ENCODE measurements at regions of chr10 and their contacts with region 1.

Region 1: DNA sequence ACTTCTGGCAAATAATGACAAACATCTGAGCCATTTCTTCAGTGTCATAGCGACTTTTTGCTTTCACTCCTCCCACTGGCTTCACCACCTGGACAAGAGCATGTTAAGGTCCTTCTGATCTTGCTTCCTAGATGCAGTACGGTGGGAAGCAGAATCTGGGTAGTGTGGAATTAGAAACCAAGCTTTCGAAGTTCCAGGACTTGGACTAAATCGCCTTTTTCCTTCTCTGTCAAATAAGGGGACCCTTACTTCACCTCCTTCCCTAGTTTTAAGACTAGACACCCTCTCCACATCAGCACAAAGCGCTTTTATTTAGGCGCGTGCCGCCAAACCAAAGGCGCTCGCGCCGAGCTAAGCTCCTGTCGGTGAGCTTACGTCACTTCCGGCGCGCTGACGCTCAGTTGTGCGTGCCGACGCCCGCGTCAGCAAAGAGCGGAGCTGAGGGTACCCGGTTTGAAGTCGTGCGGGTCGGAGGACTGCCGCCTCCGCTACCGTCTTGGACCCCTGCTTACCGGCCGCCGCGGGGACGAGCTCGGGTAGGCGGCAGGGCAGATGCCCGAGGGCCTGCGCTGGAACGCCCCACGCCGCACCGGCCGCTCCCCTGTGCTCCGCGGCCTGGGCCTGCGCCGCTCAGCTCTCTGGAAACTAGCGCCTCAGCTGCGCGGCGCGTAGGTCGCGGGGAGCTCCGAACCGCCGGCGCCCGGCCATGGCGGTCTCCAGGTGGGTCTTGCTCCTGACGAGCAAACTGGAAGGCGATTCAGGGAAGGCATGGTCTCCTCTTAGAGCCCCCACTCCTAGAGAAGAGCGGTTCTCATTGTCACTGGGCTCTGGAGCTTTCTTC is at the start of gene BTAF1:
- DNase-seq: peak; percentile 94
- H3K4me3 Mint-ChIP-seq: peak within 1 kb of the TSS; percentile 88
- H3K27ac Mint-ChIP-seq: peak within 1 kb of the TSS; percentile 97
- H3K4me1 Mint-ChIP-seq: peaks cover 37% of the 10 kb centered on the region
- H3K27me3 Mint-ChIP-seq: peaks cover 1% of the 10 kb centered on the region
- total RNA-seq, gene BTAF1: 49.9 to 50.7 TPM

Region 2: DNA sequence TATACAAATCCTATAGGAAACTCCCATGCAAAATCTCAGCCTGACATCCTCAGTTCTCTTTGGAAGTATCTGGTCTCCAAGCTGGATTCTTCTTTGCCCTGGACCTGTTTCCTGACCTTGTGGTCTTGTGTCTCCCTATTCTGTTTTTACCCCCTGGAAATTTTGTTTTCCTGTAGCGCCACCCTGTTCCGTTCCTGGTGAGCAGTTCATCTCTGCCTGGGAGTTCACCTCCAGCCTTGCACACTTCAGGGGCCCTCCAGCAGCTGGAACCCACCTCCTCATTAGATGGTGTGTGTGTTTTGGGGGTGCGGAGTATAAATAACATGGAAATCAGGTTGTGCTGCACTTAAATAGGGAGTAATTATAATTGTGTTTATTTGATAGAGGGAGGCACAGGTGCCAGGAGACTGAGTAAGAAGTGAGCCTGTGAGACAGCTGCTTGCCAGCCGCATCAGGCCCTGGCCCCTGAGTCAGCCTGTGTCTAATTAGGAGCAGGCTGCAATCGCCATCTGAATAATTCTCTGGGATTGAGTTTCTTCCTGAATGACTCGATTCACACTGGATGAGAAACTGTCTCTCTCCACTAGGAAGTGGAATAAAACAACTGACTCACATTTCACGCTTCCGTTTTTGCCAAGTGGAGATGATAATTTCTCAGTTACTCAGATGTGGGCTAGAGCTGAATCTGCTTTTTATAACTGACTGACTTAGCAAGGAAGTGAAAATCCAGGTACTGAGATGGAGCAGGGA is 582.8 kb before region 1 on chr10:
- CTCF ChIA-PET with region 1: no interaction called
- POLR2A ChIA-PET with region 1: no interaction called
- intact Hi-C with region 1: no loop called
- DNase-seq: peak; percentile 23
- H3K4me3 Mint-ChIP-seq: no peak overlapping the region
- H3K27ac Mint-ChIP-seq: no peak overlapping the region
- H3K4me1 Mint-ChIP-seq: no peaks in the 10 kb centered on the region
- H3K27me3 Mint-ChIP-seq: no peaks in the 10 kb centered on the region

Region 3: DNA sequence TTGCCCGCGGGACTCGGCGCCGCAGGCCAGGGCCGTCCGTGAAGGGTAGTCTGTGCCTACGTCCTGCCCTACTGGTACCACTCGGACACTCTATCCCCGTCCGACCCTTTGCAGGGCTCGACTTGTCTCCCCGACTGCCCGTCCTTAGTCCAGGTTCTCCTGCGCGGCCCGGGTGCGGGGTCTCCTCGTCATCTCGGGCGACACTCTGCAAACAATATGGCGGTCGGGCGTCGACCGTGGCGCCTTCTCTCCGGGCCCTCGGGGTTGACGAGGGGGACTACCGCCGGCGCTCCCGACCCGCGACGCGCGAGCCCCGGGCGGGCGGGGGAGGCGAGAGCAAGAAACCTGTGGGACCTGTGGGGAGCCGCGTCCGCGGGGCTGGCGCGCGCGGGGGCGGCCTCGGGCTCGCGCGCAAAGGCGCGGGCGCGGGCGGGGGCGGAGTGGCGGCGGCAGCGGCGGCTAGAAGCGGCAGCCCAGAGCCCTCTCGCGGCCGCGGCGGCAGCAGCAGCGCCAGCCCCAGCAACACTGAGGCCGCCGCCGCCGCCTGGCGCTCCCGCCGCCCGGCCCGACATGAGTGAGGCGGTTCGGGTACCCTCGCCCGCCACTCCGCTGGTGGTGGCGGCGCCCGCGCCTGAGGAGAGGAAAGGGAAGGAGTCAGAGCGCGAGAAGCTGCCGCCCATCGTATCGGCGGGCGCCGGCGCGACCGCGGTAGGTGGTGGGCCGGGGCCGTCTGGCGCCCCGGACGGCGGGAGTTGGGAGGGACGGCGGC is 513.5 kb before region 1 on chr10 and contains the start of gene HECTD2:
- CTCF ChIA-PET with region 1: no interaction called
- POLR2A ChIA-PET with region 1: no interaction called
- intact Hi-C with region 1: loop called (anchors 5 kb)
- DNase-seq: peak; percentile 82
- H3K4me3 Mint-ChIP-seq: peak within 1 kb of the TSS; percentile 79
- H3K27ac Mint-ChIP-seq: peak within 1 kb of the TSS; percentile 83
- H3K4me1 Mint-ChIP-seq: peaks cover 13% of the 10 kb centered on the region
- H3K27me3 Mint-ChIP-seq: no peaks in the 10 kb centered on the region
- total RNA-seq, gene HECTD2: 4.0 to 5.5 TPM

Region 4: DNA sequence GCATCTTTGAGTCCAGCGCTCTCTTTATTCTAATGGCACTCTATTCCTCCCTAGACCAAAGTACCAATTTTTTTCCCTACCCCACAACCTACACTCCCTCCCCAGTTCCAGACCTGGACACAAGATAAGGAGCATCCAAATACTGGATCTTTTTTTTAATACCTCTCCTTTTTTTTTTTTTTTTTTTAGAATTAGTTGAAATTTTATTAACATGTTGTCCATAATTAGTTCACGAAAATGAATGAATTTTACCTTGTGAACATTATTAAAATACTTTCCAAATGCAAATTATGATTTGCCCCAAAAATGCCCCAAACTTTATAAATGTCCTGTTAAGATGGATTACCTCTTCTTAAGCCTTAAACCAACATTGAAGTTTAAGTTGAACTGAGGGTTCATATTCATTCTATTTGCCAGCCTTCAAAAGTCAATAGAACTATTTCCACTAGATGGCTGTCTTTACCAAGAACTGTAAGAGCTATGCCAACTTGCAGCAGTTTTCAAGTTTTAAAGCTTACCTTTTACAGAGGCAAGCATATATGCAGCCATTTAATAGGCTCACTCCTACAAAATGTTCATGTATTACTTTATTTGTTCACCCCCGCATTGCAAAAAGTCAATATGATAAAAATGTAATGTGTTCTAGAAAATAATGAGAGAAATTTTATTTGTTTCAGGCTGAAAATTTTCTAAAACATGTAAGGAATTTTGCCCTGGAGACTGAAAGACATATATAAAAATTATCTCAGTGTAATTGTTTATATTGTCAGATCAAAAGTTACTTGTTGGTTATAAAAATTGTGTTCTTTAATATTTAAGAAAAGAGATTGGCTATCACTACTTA is 165.1 kb before region 1 on chr10:
- CTCF ChIA-PET with region 1: interaction called, 12 read pairs
- POLR2A ChIA-PET with region 1: no interaction called
- intact Hi-C with region 1: no loop called
- DNase-seq: no peak
- H3K4me3 Mint-ChIP-seq: no peak overlapping the region
- H3K27ac Mint-ChIP-seq: no peak overlapping the region
- H3K4me1 Mint-ChIP-seq: no peaks in the 10 kb centered on the region
- H3K27me3 Mint-ChIP-seq: peaks cover 14% of the 10 kb centered on the region

Region 5: GRCh38 chr10:91944880-91945630 is 21.5 kb after region 1 on chr10:
- CTCF ChIA-PET with region 1: interaction called, 3 read pairs
- POLR2A ChIA-PET with region 1: interaction called, 8 read pairs
- intact Hi-C with region 1: loop called (anchors 1 kb)
- DNase-seq: peak; percentile 48
- H3K4me3 Mint-ChIP-seq: no peak overlapping the region
- H3K27ac Mint-ChIP-seq: peak overlapping the region; percentile 61
- H3K4me1 Mint-ChIP-seq: peaks cover 21% of the 10 kb centered on the region
- H3K27me3 Mint-ChIP-seq: no peaks in the 10 kb centered on the region